Sigmoid colon (tissue), 7 donors: ENCODE measurements at regions of chr19 and their contacts with region 1.

Region 1: GRCh38 chr19:42794765-42795164 is 29.3 kb upstream of the PSG8 start:
- DNase-seq: no peak
- H3K4me3 ChIP-seq: no peak overlapping the region
- H3K27ac ChIP-seq: no peak overlapping the region
- H3K4me1 ChIP-seq: peaks cover 0 to 8% (median 7%) of the 10 kb centered on the region in 4 donors
- H3K27me3 ChIP-seq: no peaks in the 10 kb centered on the region
- CTCF ChIP-seq: no peak
- EP300 ChIP-seq: no peak
- POLR2A ChIP-seq: no peak

Region 2: GRCh38 chr19:42881229-42881628 is 86.5 kb after region 1 on chr19:
- intact Hi-C with region 1: loop called (anchors 2 kb)
- DNase-seq: no peak
- H3K4me3 ChIP-seq: no peak overlapping the region
- H3K27ac ChIP-seq: no peak overlapping the region
- H3K4me1 ChIP-seq: peaks cover 0 to 17% (median 8%) of the 10 kb centered on the region in 4 donors
- H3K27me3 ChIP-seq: no peaks in the 10 kb centered on the region
- CTCF ChIP-seq: peak in 1 of 4 experiments; percentile 55
- EP300 ChIP-seq: no peak
- POLR2A ChIP-seq: no peak

Region 3: DNA sequence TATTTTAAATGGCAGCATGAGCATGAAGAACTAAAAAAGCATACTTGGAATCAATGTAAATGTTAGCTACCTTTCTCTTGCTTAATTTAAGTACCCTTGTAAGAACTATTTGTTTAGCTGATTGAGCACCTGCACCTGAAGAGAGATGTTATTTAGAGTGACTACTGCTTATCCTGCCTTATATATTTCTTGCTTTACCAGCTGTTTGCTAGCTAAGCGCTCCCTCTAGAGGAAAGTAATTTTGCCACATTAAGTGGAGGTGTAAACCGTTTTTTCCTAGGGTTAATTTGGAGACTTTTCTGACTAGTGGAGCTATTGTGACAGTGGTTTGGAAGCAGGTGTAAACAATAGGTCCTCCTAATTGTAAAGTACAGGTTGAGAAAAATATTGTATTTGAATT is 307.2 kb after region 1 on chr19:
- intact Hi-C with region 1: loop called (anchors 10 kb)
- DNase-seq: no peak
- H3K4me3 ChIP-seq: no peak overlapping the region
- H3K27ac ChIP-seq: no peak overlapping the region
- H3K4me1 ChIP-seq: peaks cover 0 to 1% (median 0%) of the 10 kb centered on the region in 4 donors
- H3K27me3 ChIP-seq: no peaks in the 10 kb centered on the region
- CTCF ChIP-seq: no peak
- EP300 ChIP-seq: no peak
- POLR2A ChIP-seq: no peak